ENCODE measurements at regions of chr10 and their contacts with region 1.

Region 1: DNA sequence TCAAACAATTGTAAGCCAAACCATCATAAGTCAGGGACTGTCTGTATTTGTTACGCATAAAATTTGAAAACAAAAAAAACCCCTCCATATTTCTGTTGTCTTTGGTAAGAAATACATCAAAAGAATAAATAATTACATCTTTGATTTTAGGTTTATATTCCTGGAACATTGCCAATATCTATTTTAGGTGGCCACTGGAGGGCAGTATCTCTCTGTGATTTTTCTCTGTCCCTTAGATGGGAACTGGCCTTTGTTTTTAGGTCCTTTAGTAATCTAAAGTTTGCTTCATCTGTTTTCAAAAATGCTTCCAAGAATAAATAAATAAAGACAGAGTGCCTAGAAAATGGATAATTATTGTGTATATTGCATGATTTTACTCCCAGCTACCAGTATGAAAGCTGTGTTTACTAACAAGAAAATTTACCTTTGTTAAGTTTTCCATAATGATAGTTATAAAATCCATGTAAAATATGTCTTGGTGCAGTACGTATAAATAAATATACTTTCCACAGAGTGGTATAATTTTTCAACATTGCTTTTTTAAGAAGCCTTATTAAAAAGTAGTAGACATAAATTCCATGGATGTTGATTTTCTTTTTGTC is 64.2 kb downstream of the PHYHIPL start:
- DNase-seq: peak; percentile 20
- H3K4me3 ChIP-seq: no peak overlapping the region
- H3K27ac ChIP-seq: no peak overlapping the region
- H3K27me3 ChIP-seq: no peaks in the 10 kb centered on the region
- CTCF ChIP-seq: peak; percentile 37

Region 2: DNA sequence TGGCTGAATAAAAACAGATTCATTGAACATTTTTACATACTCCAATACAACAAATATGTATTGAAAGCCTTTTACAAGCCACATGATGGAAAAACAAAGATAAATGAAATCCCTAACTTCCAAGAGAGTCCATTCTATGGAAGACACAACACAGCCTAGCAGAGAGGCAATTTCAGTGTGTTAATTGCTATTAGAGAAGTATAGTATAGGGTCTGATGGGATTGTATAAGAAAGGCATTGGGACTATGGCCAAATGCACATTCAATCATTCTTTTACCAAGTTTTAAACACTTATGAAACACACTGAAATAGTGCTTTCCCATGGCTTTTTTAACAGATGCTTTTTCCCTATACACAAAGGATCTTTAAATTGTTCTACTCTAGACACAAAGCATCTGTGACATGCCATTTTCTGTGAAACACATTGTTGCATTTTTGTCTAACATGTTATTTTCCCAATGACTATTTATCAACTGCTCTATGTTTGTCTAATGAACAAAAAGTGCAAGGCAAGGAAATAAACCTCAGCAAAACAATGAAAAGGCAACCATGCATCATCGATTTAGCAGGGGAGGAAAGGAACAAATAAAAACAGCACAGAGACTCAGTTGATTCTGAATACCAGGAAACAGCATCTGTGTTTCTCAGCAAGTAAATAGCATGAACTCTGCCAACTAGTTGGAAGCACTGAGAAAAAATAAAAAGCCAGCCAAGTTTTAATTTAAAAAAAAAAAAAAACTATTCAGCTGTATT is 106.7 kb before region 1 on chr10:
- in situ Hi-C with region 1: no loop called
- DNase-seq: no peak
- H3K4me3 ChIP-seq: no peak overlapping the region
- H3K27ac ChIP-seq: no peak overlapping the region
- H3K27me3 ChIP-seq: no peaks in the 10 kb centered on the region
- CTCF ChIP-seq: no peak

Region 3: GRCh38 chr10:59580026-59580863 is 339.6 kb after region 1 on chr10:
- in situ Hi-C with region 1: loop called (anchors 25 kb)
- DNase-seq: peak; percentile 33
- H3K4me3 ChIP-seq: no peak overlapping the region
- H3K27ac ChIP-seq: no peak overlapping the region
- H3K27me3 ChIP-seq: no peaks in the 10 kb centered on the region
- CTCF ChIP-seq: peak; percentile 54

Measured in brain microvascular endothelial cell (primary cell).